HAP-1 (cell line): ENCODE measurements at regions of chr3 and their contacts with region 1.

Region 1: DNA sequence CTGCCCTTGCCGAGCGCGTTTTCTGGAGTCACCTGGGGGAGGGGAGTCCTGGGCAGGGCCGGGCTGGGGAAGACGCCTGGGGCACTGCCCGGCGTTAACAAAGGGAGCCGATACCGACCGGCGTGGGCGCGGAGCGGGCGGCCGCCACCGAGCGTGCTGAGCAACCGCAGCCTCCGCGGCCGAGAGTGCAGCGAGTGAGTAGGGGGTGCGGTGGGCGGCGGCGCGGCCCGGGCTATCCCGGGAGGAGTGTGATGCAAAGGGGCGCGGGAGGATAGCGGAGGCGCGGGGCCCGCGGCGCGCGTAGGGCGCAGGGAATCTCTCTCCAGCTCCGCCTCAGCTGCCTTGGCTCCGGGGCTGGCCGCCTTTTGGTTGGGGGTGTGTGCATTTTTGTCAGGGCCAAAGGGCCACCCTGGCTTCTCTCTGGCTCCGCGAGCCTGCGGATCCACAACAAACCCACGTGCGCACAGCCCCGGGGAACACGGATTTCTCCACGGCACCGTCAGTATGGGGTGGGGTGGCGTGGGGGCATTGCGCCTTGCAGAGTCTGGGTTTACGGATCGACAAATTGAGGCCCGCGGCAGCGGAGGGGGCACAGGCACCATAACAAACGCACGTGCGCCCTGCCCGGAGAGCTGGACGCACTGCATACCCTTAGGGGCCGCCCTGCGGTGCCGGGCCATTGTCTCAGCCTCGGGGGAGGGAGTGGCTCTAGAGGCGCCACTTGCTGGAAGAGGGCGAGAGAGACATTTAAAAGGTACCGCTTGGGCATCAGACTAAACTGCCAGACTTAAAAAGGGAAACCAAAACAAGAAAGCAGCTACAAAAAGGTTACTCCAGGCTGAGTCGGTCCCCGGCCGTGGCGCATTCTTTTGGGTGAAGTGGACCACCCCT is 560 bp downstream of the ST6GAL1 start:
- DNase-seq: peak; percentile 66 to 89
- H3K4me3 ChIP-seq: peak overlapping the region; percentile 91
- H3K4me1 ChIP-seq: peaks cover 23% of the 10 kb centered on the region
- H3K27me3 ChIP-seq: no peaks in the 10 kb centered on the region

Region 2: GRCh38 chr3:186849374-186849975 is 81.4 kb before region 1 on chr3:
- in situ Hi-C with region 1: loop called (anchors 5 kb)
- DNase-seq: peak in 1 of 2 experiments; percentile 82
- H3K4me3 ChIP-seq: no peak overlapping the region
- H3K4me1 ChIP-seq: peaks cover 3% of the 10 kb centered on the region
- H3K27me3 ChIP-seq: no peaks in the 10 kb centered on the region

Region 3: GRCh38 chr3:186882881-186883685 is 47.8 kb before region 1 on chr3:
- in situ Hi-C with region 1: loop called (anchors 10 kb)
- DNase-seq: no peak
- H3K4me3 ChIP-seq: no peak overlapping the region
- H3K4me1 ChIP-seq: peaks cover 43% of the 10 kb centered on the region
- H3K27me3 ChIP-seq: no peaks in the 10 kb centered on the region